OCI-LY7 (cell line): ENCODE measurements at regions of chr20 and their contacts with region 1.

Region 1: GRCh38 chr20:34363062-34363464 is at the start of gene ITCH:
- DNase-seq: peak; percentile 96
- H3K4me3 ChIP-seq: peak within 1 kb of the TSS; percentile 92
- H3K27ac ChIP-seq: peak within 1 kb of the TSS; percentile 42
- H3K4me1 ChIP-seq: peaks cover 46% of the 10 kb centered on the region
- CTCF ChIP-seq: no peak
- total RNA-seq, gene ITCH: 19.3 and 26.1 TPM in 2 replicates

Region 2: GRCh38 chr20:34377072-34377847 is 14.2 kb after region 1 on chr20:
- CTCF ChIA-PET with region 1: no interaction called
- POLR2A ChIA-PET with region 1: interaction called, 12 read pairs
- intact Hi-C with region 1: no loop called
- DNase-seq: no peak
- H3K4me3 ChIP-seq: no peak overlapping the region
- H3K27ac ChIP-seq: no peak overlapping the region
- H3K4me1 ChIP-seq: no peaks in the 10 kb centered on the region
- CTCF ChIP-seq: no peak

Region 3: GRCh38 chr20:34415079-34415478 is 52.0 kb after region 1 on chr20:
- CTCF ChIA-PET with region 1: no interaction called
- POLR2A ChIA-PET with region 1: interaction called, 11 read pairs
- intact Hi-C with region 1: no loop called
- DNase-seq: peak; percentile 79
- H3K4me3 ChIP-seq: peak overlapping the region; percentile 8
- H3K27ac ChIP-seq: peak overlapping the region; percentile 78
- H3K4me1 ChIP-seq: peaks cover 31% of the 10 kb centered on the region
- CTCF ChIP-seq: no peak